ENCODE measurements at regions of chr4 and their contacts with region 1.

Region 1: DNA sequence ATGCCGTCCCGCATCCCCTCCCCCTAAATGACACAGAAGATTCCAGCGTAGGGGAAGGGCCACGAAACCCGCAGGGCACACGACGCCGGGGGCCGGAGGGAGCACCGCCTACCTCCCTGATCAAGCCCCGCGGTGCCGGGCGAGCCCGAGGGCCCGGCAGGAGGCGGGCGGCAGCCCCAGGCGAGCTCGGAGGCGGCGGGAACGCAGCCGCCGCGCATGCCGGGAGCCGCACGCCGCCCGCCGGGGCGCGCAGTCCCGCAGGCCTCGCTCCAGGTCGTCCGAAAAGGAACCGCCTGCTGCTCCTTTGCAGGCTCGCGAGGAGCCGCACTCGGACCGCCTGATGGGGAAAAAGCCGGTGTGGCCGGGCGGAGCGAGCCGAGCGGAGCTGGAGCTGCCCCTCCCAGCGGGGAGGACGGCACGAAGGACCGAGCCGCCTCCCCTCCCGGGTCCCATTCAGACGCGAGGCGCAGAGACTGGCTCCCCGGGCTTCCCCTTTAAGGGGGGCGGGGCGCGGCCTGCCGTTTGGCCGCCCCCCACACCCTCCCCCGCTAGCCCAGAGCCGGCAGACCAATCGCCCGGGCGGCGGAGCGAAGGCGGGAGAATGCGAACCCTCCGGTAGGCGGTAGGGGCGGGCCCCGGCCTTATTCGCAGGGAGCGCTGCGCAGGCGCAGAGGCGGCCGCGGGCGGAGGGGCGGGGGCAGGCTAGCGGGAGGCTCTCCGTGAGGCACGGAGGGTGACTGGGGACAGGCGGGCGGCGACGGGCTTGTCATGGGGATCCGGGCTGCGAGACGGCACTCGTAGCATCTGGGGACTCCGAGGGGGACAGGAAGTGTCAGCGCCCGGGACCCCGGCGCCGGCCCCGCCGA is 561 bp upstream of the ING2 start:
- DNase-seq: peak; percentile 98 to 100 (median 100)
- ATAC-seq: peak; percentile 89
- H3K4me3 ChIP-seq: peak overlapping the region; percentile 90
- H3K4me3 Mint-ChIP-seq: peak overlapping the region; percentile 83 to 98 (median 92)
- H3K27ac ChIP-seq: peak overlapping the region; percentile 86
- H3K27ac Mint-ChIP-seq: peak overlapping the region; percentile 89 to 99 (median 95)
- H3K4me1 ChIP-seq: peaks cover 6 to 11% of the 10 kb centered on the region in 2 donors
- H3K4me1 Mint-ChIP-seq: peaks cover 11 to 47% (median 43%) of the 10 kb centered on the region in 7 donors
- H3K27me3 ChIP-seq: no peaks in the 10 kb centered on the region
- H3K27me3 Mint-ChIP-seq: no peaks in the 10 kb centered on the region

Region 2: DNA sequence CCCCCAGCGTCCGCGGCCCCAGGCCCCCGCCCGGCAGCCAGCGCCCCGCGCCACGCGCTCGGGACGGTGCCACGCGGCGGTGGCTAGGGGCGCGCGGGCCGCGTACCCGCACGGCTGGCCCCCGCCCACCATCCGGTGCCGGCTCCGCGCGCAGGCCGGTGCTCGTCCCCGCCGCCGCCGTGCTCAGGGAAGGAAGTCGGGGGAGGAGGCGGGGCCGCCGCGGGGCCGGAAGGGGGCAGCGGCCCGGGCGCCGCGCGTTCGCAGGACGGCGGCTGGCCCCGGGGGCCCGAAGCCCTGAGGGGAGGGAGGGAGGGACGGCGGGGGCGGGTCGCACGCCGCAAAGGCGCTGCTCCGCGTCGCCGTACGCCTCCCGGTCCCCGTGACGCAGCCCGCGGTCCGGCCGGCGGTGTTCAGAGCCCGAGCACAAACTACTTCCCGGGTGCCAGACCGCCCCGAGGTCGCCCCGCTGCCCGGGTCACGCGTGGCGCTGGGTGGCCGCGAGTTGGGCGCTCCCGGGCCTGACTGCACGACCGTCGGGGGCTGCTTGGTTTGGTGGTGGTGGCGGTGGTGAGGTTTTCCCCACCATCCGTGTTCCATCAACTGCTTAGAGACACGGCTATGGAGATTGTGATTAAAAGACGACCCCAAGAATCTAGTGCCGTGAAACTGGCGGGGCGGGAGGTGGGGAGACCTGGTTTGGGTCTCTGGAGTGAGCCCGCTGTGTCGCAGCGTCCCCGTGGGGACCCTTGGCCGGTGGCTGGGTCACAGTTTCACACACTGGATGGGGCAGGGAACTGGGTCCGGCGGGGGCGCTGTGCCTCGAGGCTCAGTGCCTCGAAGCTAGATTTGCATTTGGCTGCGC is 586.9 kb before region 1 on chr4 and contains the start of gene DCTD:
- CTCF ChIA-PET with region 1: no interaction called
- POLR2A ChIA-PET with region 1: interaction called, 3 read pairs
- intact Hi-C with region 1: loop called (anchors 1 kb)
- DNase-seq: peak; percentile 71 to 90 (median 80)
- ATAC-seq: peak; percentile 89
- H3K4me3 ChIP-seq: peak within 1 kb of the TSS; percentile 77
- H3K4me3 Mint-ChIP-seq: peak within 1 kb of the TSS; percentile 75 to 95 (median 90)
- H3K27ac ChIP-seq: peak within 1 kb of the TSS; percentile 89
- H3K27ac Mint-ChIP-seq: peak within 1 kb of the TSS; percentile 86 to 98 (median 92)
- H3K4me1 ChIP-seq: peaks cover 20 to 26% of the 10 kb centered on the region in 2 donors
- H3K4me1 Mint-ChIP-seq: peaks cover 17 to 58% (median 50%) of the 10 kb centered on the region in 7 donors
- H3K27me3 ChIP-seq: no peaks in the 10 kb centered on the region
- H3K27me3 Mint-ChIP-seq: peaks cover 0 to 6% (median 0%) of the 10 kb centered on the region in 5 donors
- total RNA-seq, gene DCTD: 61.4 to 76.2 (median 68.9) TPM

Region 3: DNA sequence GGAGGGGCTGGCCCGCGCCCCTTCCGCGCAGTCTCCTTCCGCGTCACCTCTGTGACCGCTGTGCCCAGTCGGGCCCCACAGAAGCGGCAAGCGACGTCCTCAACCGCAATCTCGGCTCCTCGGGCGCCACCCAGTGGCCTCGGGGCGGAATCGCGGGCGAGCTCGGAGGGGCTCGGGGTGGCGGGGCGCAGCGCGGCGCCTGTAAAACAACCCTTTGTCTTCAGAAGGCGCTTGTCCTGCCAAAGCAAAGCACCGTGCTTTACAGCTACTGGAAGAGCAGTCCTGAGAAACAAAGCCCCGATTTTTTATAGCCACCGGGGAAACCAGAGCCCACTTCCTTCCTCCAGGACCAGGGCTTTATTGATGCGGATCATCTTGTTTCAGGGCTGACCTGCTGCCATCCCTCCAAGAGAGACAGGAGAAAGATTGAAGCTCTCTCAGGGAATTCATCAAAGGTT is 97.1 kb before region 1 on chr4:
- CTCF ChIA-PET with region 1: interaction called, 3 read pairs
- POLR2A ChIA-PET with region 1: no interaction called
- intact Hi-C with region 1: loop called in 1 of 2 experiments (anchors 1 kb)
- DNase-seq: peak; percentile 83 to 96 (median 90)
- ATAC-seq: peak; percentile 99
- H3K4me3 ChIP-seq: peak overlapping the region; percentile 78
- H3K4me3 Mint-ChIP-seq: peak overlapping the region; percentile 60 to 88 (median 85)
- H3K27ac ChIP-seq: peak overlapping the region; percentile 72
- H3K27ac Mint-ChIP-seq: peak overlapping the region; percentile 80 to 95 (median 87)
- H3K4me1 ChIP-seq: no peaks in the 10 kb centered on the region
- H3K4me1 Mint-ChIP-seq: peaks cover 5 to 30% (median 17%) of the 10 kb centered on the region in 7 donors
- H3K27me3 ChIP-seq: no peaks in the 10 kb centered on the region
- H3K27me3 Mint-ChIP-seq: peaks cover 0 to 11% (median 0%) of the 10 kb centered on the region in 5 donors

Region 4: DNA sequence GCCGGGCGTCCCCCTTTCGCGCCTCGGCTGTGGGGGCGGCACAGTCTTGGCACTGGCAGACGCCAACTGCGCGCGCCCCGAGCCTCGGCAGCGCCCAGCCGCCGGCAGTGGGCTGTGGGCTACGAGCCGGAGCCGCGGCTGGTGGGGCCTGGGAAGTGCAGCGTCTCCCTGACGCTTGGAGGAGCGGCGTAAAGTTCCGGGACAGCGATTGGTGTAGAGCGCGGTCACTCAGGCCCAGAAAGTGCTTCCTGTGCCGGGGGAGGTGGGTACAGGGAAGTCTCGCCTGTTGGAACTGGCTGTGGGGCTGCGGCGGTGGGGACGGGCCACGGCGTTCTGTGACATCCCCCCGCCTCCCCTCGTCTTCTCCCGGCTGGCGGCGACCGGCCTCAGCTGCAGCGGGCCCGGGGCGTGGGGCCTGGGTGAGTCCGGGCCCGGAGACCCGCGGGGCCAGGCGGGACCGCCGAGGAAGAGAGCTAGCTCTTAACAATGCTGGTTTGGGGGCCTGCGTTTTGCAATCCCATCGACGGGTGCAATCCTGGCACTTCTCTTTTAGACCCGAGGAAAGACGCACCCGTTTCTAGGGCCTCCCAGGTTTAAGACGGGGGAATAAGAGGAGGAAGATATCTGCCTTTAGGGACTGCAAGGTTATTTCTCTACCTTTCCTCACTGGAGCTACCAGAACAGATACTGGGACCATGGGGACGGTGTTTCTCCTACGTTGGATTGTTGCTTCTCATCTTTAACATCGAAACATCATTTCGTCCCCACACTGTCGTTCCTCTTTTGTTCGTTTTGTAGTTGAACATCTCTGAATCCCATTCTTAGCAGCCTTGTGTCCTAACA is 155.0 kb after region 1 on chr4 and contains the starts of genes RWDD4 and TRAPPC11:
- CTCF ChIA-PET with region 1: no interaction called
- POLR2A ChIA-PET with region 1: interaction called, 5 read pairs
- intact Hi-C with region 1: loop called (anchors 1 kb)
- DNase-seq: peak; percentile 83 to 97 (median 95)
- ATAC-seq: peak; percentile 99
- H3K4me3 ChIP-seq: peak within 1 kb of the TSS; percentile 87
- H3K4me3 Mint-ChIP-seq: peak within 1 kb of the TSS; percentile 91 to 98 (median 96)
- H3K27ac ChIP-seq: peak within 1 kb of the TSS; percentile 96
- H3K27ac Mint-ChIP-seq: peak within 1 kb of the TSS; percentile 90 to 99 (median 95)
- H3K4me1 ChIP-seq: peaks cover 14 to 19% of the 10 kb centered on the region in 2 donors
- H3K4me1 Mint-ChIP-seq: peaks cover 35 to 48% (median 38%) of the 10 kb centered on the region in 7 donors
- H3K27me3 ChIP-seq: no peaks in the 10 kb centered on the region
- H3K27me3 Mint-ChIP-seq: no peaks in the 10 kb centered on the region
- total RNA-seq, gene RWDD4: 9.3 to 15.8 (median 11.6) TPM
- total RNA-seq, gene TRAPPC11: 26.3 to 48.8 (median 35.6) TPM

Region 5: GRCh38 chr4:184417802-184418511 is 913.7 kb after region 1 on chr4:
- CTCF ChIA-PET with region 1: no interaction called
- POLR2A ChIA-PET with region 1: no interaction called
- intact Hi-C with region 1: loop called in 1 of 2 experiments (anchors 10 kb)
- DNase-seq: peak in 2 of 9 donors; percentile 26 to 31
- ATAC-seq: peak; percentile 69
- H3K4me3 ChIP-seq: peak overlapping the region; percentile 64
- H3K4me3 Mint-ChIP-seq: peak overlapping the region; percentile 23 to 94 (median 82)
- H3K27ac ChIP-seq: peak overlapping the region; percentile 74
- H3K27ac Mint-ChIP-seq: peak overlapping the region; percentile 82 to 97 (median 95)
- H3K4me1 ChIP-seq: peaks cover 35 to 52% of the 10 kb centered on the region in 2 donors
- H3K4me1 Mint-ChIP-seq: peaks cover 43 to 80% (median 77%) of the 10 kb centered on the region in 7 donors
- H3K27me3 ChIP-seq: no peaks in the 10 kb centered on the region
- H3K27me3 Mint-ChIP-seq: no peaks in the 10 kb centered on the region

Region 6: DNA sequence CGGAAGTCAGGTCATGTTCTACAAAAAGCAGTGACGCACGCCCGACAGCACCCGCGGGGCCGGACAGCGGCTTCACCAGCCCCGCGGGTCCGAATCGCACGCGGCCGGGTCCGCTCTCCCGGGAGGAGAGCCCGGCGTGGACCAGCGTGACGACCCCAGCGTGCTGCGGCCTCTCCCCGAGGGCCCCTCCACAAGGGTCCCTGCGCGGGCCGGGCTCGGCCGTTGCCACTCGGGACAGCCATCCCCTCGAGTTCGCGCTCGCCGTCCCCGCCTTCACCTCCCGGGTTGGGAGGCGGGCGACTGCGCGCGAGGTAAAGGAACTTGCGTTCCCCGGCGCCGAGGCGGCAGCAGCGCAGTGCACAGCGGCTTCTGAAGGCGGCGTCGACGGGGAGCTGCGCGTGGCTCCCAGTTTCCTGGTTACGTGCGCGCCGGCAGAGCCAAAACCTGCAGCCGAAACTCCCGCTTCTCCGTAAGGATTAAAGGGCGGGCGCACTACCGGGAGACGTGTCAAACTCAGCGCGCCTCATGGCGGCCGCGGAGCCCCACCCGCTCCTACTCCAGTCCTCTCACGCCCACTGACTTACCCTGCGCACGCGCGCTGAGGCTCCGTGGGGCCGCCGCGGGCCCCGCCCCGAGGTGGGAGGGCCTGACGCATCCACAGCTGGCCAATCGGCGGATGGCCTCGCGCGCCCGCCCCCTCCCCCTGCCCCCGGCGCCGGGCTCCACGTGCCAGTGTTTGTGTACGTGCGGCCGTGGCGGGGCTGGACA is 1891.8 kb after region 1 on chr4:
- CTCF ChIA-PET with region 1: no interaction called
- POLR2A ChIA-PET with region 1: no interaction called
- intact Hi-C with region 1: loop called in 1 of 2 experiments (anchors 2 kb)
- DNase-seq: peak; percentile 93 to 100 (median 97)
- ATAC-seq: peak; percentile 97
- H3K4me3 ChIP-seq: peak overlapping the region; percentile 69
- H3K4me3 Mint-ChIP-seq: peak overlapping the region; percentile 82 to 100 (median 97)
- H3K27ac ChIP-seq: peak overlapping the region; percentile 97
- H3K27ac Mint-ChIP-seq: peak overlapping the region; percentile 90 to 100 (median 99)
- H3K4me1 ChIP-seq: peaks cover 12 to 15% of the 10 kb centered on the region in 2 donors
- H3K4me1 Mint-ChIP-seq: peaks cover 14 to 57% (median 27%) of the 10 kb centered on the region in 7 donors
- H3K27me3 ChIP-seq: no peaks in the 10 kb centered on the region
- H3K27me3 Mint-ChIP-seq: no peaks in the 10 kb centered on the region